AG04450 (cell line): ENCODE measurements at regions of chr12 and their contacts with region 1.

Region 1: GRCh38 chr12:76031537-76032073 is at the start of gene PHLDA1:
- DNase-seq: peak; percentile 97
- H3K4me3 ChIP-seq: peak within 1 kb of the TSS; percentile 98
- H3K27ac ChIP-seq: peak within 1 kb of the TSS; percentile 99
- H3K27me3 ChIP-seq: no peaks in the 10 kb centered on the region
- CTCF ChIP-seq: peak; percentile 58
- polyA plus RNA-seq, gene PHLDA1: 89.0 and 99.5 TPM in 2 replicates

Region 2: GRCh38 chr12:75526655-75527511 is 504.7 kb before region 1 on chr12:
- CTCF ChIA-PET with region 1: interaction called, 44 read pairs
- POLR2A ChIA-PET with region 1: interaction called, 13 read pairs
- DNase-seq: peak; percentile 71
- H3K4me3 ChIP-seq: no peak overlapping the region
- H3K27ac ChIP-seq: no peak overlapping the region
- H3K27me3 ChIP-seq: no peaks in the 10 kb centered on the region
- CTCF ChIP-seq: peak; percentile 69

Region 3: GRCh38 chr12:75684678-75685601 is 346.7 kb before region 1 on chr12:
- CTCF ChIA-PET with region 1: no interaction called
- POLR2A ChIA-PET with region 1: interaction called, 11 read pairs
- DNase-seq: no peak
- H3K4me3 ChIP-seq: no peak overlapping the region
- H3K27ac ChIP-seq: peak overlapping the region; percentile 55
- H3K27me3 ChIP-seq: no peaks in the 10 kb centered on the region
- CTCF ChIP-seq: no peak

Region 4: DNA sequence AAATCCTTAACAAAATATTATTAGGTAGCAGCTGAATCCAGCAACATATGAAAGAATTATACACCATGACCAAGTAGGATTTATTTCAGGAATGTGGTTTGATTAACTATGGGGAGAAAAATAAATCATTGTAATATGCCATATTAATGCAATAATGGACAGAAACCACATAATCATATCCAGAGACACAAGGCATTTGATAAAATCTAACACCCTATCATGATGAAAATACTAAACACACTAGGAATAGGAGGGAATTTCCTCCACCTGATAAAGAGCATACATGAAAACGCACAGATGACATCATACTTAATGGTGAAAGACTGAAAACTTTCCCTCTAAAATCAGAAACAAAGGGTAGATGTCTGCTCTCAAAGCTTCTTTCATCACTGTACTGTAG is 238.9 kb before region 1 on chr12:
- CTCF ChIA-PET with region 1: no interaction called
- POLR2A ChIA-PET with region 1: no interaction called
- DNase-seq: no peak
- H3K4me3 ChIP-seq: no peak overlapping the region
- H3K27ac ChIP-seq: no peak overlapping the region
- H3K27me3 ChIP-seq: no peaks in the 10 kb centered on the region
- CTCF ChIP-seq: no peak

Region 5: GRCh38 chr12:75820848-75821578 is 210.6 kb before region 1 on chr12:
- CTCF ChIA-PET with region 1: interaction called, 3 read pairs
- POLR2A ChIA-PET with region 1: interaction called, 13 read pairs
- DNase-seq: peak; percentile 93
- H3K4me3 ChIP-seq: no peak overlapping the region
- H3K27ac ChIP-seq: peak overlapping the region; percentile 42
- H3K27me3 ChIP-seq: no peaks in the 10 kb centered on the region
- CTCF ChIP-seq: peak; percentile 27

Region 6: DNA sequence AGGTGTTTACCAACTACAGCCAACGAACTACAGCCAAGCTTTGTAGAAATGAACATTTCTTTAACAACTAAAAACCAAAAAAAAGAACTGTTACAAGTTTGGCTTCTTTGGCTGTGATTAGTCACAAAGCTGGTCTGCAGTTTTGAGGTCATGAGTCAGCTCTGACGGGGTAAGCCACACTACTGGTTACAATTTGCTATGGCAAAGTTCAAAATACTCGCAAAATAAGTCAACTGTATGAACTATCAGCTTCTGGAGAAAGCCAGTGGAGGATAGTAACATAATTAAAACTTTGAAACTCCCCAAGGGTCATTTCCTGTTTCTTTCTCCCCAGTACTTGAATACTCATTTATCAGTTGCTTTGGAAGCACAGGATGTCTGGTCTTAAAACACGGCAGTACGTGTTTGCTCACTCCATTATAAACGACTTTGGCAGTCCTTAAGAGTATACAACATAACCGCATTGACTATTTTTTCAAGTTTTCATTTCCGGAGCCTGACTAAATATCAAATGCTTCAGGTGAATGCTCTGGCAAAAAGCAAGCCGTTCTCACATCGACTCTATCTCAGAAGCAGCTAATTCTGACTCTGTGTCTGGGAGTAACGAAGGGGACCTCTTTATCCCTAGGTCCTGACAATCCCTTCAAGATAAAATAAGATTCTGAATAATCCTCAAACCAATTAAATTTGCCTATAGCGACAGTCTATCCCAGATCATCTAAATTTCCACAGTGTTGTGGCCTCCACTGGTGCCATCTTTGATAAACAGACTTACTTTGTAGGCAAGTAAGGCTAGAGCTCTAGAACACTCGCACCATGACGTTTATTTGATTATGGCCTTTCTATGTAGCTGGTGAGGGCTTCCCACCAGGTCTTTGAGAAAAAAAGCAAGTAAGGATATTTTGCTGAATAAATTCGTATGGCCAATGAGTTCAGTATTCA is 10.6 kb before region 1 on chr12:
- CTCF ChIA-PET with region 1: interaction called, 3 read pairs
- POLR2A ChIA-PET with region 1: interaction called, 16 read pairs
- DNase-seq: peak; percentile 93
- H3K4me3 ChIP-seq: no peak overlapping the region
- H3K27ac ChIP-seq: peak overlapping the region; percentile 96
- H3K27me3 ChIP-seq: no peaks in the 10 kb centered on the region
- CTCF ChIP-seq: no peak